GM13976 (cell line): ENCODE measurements at regions of chr3 and their contacts with region 1.

Region 1: GRCh38 chr3:170307671-170308403 is 49.7 kb upstream of the SKIL start:
- DNase-seq: no peak
- CTCF ChIP-seq: no peak

Region 2: GRCh38 chr3:170414202-170414663 is 106.4 kb after region 1 on chr3:
- in situ Hi-C with region 1: loop called (anchors 5 kb)
- DNase-seq: peak; percentile 61
- CTCF ChIP-seq: peak; percentile 86